AG04450 (cell line): ENCODE measurements at regions of chr15 and their contacts with region 1.

Region 1: DNA sequence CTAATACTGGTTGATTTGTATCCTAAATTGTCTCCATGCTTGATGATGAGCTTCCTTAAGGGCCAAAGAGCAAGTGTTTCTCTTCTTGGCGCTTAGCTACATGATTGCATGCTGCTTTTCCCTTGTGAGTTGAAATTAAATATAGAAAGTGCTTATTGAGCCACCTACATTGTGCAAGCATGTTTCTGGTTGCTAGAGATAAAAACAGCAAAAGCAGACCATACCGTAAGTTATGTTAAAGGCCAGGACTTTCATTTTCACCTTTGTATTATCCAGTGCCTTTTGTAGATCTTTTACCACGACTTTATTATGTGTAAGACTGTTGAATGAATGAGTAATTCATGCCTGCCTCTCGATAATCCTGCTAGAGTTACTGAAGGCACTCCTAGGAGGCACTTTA is 41.9 kb upstream of the CCNB2 start:
- DNase-seq: no peak
- H3K4me3 ChIP-seq: no peak overlapping the region
- H3K27ac ChIP-seq: no peak overlapping the region
- H3K27me3 ChIP-seq: no peaks in the 10 kb centered on the region
- CTCF ChIP-seq: no peak

Region 2: GRCh38 chr15:58010983-58011382 is 1052.1 kb before region 1 on chr15:
- CTCF ChIA-PET with region 1: no interaction called
- POLR2A ChIA-PET with region 1: no interaction called
- DNase-seq: no peak
- H3K4me3 ChIP-seq: no peak overlapping the region
- H3K27ac ChIP-seq: no peak overlapping the region
- H3K27me3 ChIP-seq: no peaks in the 10 kb centered on the region
- CTCF ChIP-seq: no peak

Region 3: GRCh38 chr15:58639002-58639756 is 423.9 kb before region 1 on chr15:
- CTCF ChIA-PET with region 1: no interaction called
- POLR2A ChIA-PET with region 1: interaction called, 10 read pairs
- DNase-seq: no peak
- H3K4me3 ChIP-seq: no peak overlapping the region
- H3K27ac ChIP-seq: no peak overlapping the region
- H3K27me3 ChIP-seq: no peaks in the 10 kb centered on the region
- CTCF ChIP-seq: no peak

Region 4: DNA sequence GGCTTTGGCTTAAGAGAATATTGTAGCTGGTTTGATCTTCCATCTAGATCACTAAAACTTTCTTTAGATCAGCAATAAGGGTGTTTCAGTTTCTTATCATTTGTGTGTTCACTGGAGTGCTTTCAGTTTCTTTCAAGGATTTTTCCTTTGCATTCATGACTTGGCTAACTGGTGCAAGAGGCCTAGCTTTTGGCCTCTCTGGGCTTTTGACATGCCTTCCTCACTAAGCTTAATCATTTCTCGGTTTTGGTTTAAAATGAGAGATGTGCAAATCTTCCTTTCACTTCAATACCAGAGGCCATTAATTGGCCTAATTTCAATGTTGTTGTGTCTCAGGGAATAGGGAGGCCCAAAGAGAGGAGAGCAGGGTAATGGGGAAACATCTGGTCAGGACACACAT is 11.6 kb after region 1 on chr15:
- CTCF ChIA-PET with region 1: interaction called, 11 read pairs
- POLR2A ChIA-PET with region 1: no interaction called
- DNase-seq: no peak
- H3K4me3 ChIP-seq: no peak overlapping the region
- H3K27ac ChIP-seq: no peak overlapping the region
- H3K27me3 ChIP-seq: no peaks in the 10 kb centered on the region
- CTCF ChIP-seq: no peak